A673 (cell line): ENCODE measurements at regions of chr20 and their contacts with region 1.

Region 1: GRCh38 chr20:44683263-44684046 is 31.7 kb upstream of the CCN5 start:
- DNase-seq: no peak
- H3K4me3 ChIP-seq: no peak overlapping the region
- H3K27ac ChIP-seq: no peak overlapping the region
- H3K4me1 ChIP-seq: no peaks in the 10 kb centered on the region
- H3K27me3 ChIP-seq: no peaks in the 10 kb centered on the region
- CTCF ChIP-seq: no peak

Region 2: GRCh38 chr20:43955062-43955749 is 728.2 kb before region 1 on chr20:
- CTCF ChIA-PET with region 1: no interaction called
- POLR2A ChIA-PET with region 1: no interaction called
- intact Hi-C with region 1: no loop called
- DNase-seq: peak; percentile 84
- H3K4me3 ChIP-seq: no peak overlapping the region
- H3K27ac ChIP-seq: peak overlapping the region; percentile 70
- H3K4me1 ChIP-seq: peaks cover 39% of the 10 kb centered on the region
- H3K27me3 ChIP-seq: no peaks in the 10 kb centered on the region
- CTCF ChIP-seq: no peak

Region 3: DNA sequence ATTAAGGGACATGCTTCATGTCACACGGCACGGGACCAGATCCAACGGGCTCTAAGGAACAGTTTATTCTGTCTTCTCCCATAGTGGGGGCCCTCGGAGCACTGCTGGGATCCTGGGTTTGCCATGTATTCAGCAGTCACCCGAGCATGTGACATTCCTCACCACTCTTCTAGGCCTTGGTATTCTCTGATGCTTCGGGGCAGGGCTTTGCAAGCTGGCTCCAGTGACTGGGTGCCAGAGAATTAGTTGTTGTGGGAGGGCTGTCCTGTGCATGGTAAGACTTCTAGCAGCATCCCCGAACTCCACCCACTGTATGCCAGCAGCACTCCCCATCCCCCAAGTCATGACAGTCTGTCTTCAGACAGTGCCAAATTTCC is 37.1 kb after region 1 on chr20:
- CTCF ChIA-PET with region 1: no interaction called
- POLR2A ChIA-PET with region 1: no interaction called
- intact Hi-C with region 1: no loop called
- DNase-seq: peak; percentile 98
- H3K4me3 ChIP-seq: no peak overlapping the region
- H3K27ac ChIP-seq: peak overlapping the region; percentile 73
- H3K4me1 ChIP-seq: peaks cover 22% of the 10 kb centered on the region
- H3K27me3 ChIP-seq: no peaks in the 10 kb centered on the region
- CTCF ChIP-seq: no peak

Region 4: DNA sequence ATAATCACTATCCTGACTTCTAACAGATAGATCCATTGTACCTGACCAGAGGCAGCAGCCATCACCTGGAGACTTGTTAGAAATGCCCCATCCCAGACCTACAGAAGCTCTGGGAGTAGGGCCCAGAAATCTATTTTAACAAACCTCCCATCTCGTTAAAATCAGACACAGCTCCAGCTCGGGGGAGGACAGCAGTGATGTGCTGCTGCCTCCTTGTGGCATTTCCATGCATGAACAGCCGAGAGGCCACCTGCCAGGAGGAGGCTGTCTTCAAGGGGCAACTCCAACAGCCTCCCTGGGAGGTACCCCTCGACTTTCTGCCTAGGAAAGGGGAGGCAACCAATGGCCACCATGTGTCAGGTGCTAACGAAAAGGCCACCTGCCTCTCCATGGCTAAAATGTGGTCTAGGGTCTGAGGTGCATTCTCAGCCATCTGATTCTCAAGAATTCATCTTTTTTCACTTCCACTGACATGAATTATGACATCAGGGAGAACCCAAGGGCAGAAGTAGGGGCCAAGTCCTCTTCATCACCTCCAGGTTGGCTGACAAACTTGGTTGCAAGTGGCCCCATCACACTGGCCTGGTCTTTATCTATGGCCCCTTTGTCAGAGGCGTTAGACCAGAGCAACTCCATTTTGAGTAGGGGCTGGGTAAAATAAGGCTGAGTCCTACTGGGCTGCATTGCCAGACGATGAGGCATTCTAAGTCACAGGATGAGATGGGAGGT is 50.0 kb after region 1 on chr20:
- CTCF ChIA-PET with region 1: interaction called, 4 read pairs
- POLR2A ChIA-PET with region 1: no interaction called
- intact Hi-C with region 1: loop called (anchors 1 kb)
- DNase-seq: peak; percentile 78
- H3K4me3 ChIP-seq: no peak overlapping the region
- H3K27ac ChIP-seq: no peak overlapping the region
- H3K4me1 ChIP-seq: peaks cover 22% of the 10 kb centered on the region
- H3K27me3 ChIP-seq: no peaks in the 10 kb centered on the region
- CTCF ChIP-seq: peak; percentile 90

Region 5: GRCh38 chr20:44747166-44748004 is 63.9 kb after region 1 on chr20:
- CTCF ChIA-PET with region 1: interaction called, 10 read pairs
- POLR2A ChIA-PET with region 1: no interaction called
- intact Hi-C with region 1: no loop called
- DNase-seq: peak; percentile 87
- H3K4me3 ChIP-seq: no peak overlapping the region
- H3K27ac ChIP-seq: no peak overlapping the region
- H3K4me1 ChIP-seq: peaks cover 14% of the 10 kb centered on the region
- H3K27me3 ChIP-seq: peaks cover 18% of the 10 kb centered on the region
- CTCF ChIP-seq: peak; percentile 82